ENCODE measurements at regions of chr17 and their contacts with region 1.

Region 1: DNA sequence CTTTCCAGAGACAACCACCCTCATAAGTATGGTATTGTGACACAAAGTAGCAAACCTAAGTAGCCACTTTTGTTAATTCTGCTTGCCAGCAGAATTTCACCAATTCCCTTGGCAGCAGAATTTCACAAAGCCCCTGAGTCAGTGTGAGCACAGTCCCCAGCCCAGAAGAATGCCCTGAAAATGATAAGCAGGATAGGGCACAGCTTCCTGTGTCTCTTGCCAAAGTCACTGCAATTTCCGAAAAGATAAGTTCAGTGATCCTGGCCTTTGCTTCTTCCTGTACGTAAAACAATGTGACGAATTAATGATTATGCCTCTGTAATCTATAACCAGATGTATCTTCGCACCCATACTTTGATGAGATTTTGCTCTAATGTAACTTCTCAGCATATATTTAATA is 16.0 kb upstream of the WIPF2 start:
- DNase-seq: no peak
- H3K4me3 ChIP-seq: no peak overlapping the region
- H3K27ac ChIP-seq: no peak overlapping the region
- H3K27me3 ChIP-seq: peaks cover 6% of the 10 kb centered on the region
- CTCF ChIP-seq: no peak

Region 2: DNA sequence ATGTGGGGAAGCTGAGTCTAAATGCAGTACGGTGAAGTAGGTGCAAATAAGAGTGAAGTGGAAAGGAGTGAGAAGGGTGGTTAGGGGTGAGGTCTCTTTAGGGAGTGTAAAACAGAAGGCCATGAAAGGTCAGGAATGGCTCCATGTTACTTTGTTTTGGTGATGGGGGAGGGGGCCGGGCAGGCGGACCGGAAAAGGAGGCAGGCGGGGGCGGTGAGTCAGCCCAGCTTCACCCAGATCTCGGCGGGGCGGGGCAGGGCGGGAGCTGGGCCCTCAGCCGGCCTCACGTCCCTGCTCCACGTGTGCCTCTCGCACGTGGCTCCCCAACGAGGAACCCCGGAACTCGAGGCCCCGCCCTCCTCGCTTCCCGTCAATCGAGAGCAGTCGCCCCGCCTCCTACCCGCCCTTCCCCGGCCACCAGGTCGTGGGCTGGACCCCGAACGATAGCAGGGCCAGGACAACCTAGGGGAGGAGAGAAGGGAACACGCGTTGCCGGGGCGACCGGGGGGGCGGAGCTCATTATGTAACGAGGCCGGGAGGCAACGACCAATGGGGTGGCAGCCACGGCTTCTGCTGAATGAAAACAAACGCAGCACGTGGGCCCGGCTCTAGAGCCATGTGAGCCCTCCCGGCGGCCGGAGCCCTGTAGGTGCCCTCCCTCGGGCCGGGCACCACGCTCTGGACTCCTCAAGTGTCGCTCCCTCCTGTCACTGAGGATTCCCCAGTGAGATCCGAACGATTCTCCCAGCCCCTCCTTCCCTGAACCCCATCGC is 104.1 kb before region 1 on chr17:
- CTCF ChIA-PET with region 1: no interaction called
- POLR2A ChIA-PET with region 1: no interaction called
- DNase-seq: peak; percentile 98
- H3K4me3 ChIP-seq: peak overlapping the region; percentile 76
- H3K27ac ChIP-seq: peak overlapping the region; percentile 85
- H3K27me3 ChIP-seq: no peaks in the 10 kb centered on the region
- CTCF ChIP-seq: no peak

Region 3: DNA sequence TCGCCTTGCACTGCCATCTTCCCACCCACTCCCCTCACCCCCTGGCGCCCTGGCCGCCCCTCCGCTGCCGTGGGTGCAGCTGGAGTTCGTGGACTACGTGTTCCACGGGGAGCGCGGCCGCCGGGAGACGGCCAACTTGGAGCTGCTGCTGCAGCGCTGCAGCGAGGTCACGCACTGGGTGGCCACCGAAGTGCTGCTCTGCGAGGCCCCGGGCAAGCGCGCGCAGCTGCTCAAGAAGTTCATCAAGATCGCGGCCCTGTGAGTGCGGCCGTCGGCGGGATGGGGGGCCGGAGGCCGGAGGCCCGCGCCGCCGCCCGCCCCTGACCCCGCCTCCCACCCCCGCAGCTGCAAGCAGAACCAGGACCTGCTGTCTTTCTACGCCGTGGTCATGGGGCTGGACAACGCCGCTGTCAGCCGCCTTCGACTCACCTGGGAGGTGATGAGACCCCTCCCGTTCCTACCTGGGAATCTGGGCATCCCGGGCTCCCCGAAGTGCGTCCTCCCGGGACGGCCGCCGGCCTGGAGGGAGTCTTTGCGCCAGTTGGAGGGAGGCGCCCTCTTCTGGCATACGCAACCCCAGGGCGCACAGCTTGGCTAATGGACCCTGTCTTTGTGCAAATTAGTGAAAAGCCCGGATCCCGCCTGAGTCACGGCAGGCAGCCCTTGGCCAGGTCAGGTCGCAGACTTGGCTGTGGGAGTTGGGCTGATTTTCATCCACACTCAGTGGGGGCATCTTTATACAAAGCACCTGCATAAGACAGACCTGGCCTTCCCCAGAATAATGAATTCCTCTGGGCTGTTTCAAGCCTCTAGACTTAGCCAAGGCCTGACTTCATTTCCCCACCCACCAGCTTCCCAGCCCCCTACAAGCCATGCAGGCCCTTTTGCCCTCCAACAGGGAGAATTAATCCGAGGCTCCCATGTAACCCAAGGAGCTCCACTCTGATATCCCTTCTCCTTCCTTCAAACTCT is 11.6 kb before region 1 on chr17:
- CTCF ChIA-PET with region 1: interaction called, 40 read pairs
- POLR2A ChIA-PET with region 1: no interaction called
- DNase-seq: no peak
- H3K4me3 ChIP-seq: peak overlapping the region; percentile 61
- H3K27ac ChIP-seq: peak overlapping the region; percentile 61
- H3K27me3 ChIP-seq: no peaks in the 10 kb centered on the region
- CTCF ChIP-seq: peak; percentile 76

Region 4: GRCh38 chr17:40230670-40231069 is 27.5 kb after region 1 on chr17:
- CTCF ChIA-PET with region 1: no interaction called
- POLR2A ChIA-PET with region 1: no interaction called
- DNase-seq: no peak
- H3K4me3 ChIP-seq: no peak overlapping the region
- H3K27ac ChIP-seq: no peak overlapping the region
- H3K27me3 ChIP-seq: no peaks in the 10 kb centered on the region
- CTCF ChIP-seq: no peak

Region 5: GRCh38 chr17:40287494-40288369 is 84.6 kb after region 1 on chr17 and contains the start of gene CDC6:
- CTCF ChIA-PET with region 1: interaction called, 40 read pairs
- POLR2A ChIA-PET with region 1: no interaction called
- DNase-seq: peak; percentile 97
- H3K4me3 ChIP-seq: peak within 1 kb of the TSS; percentile 81
- H3K27ac ChIP-seq: peak within 1 kb of the TSS; percentile 4
- H3K27me3 ChIP-seq: no peaks in the 10 kb centered on the region
- CTCF ChIP-seq: no peak
- polyA plus RNA-seq, gene CDC6: 8.6 and 9.1 TPM in 2 replicates

Measured in AG04450 (cell line).